Transverse colon (tissue), 4 donors: ENCODE measurements at regions of chr3 and their contacts with region 1.

Region 1: DNA sequence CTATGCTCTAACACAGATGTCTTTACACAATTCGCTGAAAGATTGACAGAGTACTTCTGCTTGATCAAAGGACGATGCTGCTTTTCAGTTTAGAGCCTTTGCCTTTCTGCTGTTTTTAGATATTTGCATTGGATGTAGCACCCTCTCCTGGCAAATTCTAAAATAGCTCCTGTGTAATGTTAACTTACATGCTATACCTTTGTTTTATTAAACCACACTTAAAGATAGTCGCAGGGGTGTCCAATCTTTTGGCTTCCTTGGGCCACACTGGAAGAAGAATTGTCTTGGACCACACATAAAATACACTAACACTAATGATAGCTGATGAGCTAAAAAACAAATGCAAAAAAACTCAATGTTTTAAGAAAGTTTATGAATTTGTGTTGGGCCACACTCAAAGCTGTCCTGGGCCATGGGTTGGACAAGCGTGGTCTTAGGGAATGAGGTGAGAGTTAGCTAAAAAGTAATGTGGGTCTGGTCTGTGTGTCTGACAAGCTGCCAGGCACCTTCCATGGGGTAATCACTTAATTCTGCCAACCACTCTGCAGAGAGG is 62.9 kb downstream of the ATG7 start:
- DNase-seq: no peak
- H3K4me3 ChIP-seq: no peak overlapping the region
- H3K27ac ChIP-seq: no peak overlapping the region
- H3K4me1 ChIP-seq: no peaks in the 10 kb centered on the region
- H3K27me3 ChIP-seq: no peaks in the 10 kb centered on the region
- CTCF ChIP-seq: peak; percentile 55 to 77 (median 67)
- EP300 ChIP-seq: no peak
- POLR2A ChIP-seq: no peak

Region 2: DNA sequence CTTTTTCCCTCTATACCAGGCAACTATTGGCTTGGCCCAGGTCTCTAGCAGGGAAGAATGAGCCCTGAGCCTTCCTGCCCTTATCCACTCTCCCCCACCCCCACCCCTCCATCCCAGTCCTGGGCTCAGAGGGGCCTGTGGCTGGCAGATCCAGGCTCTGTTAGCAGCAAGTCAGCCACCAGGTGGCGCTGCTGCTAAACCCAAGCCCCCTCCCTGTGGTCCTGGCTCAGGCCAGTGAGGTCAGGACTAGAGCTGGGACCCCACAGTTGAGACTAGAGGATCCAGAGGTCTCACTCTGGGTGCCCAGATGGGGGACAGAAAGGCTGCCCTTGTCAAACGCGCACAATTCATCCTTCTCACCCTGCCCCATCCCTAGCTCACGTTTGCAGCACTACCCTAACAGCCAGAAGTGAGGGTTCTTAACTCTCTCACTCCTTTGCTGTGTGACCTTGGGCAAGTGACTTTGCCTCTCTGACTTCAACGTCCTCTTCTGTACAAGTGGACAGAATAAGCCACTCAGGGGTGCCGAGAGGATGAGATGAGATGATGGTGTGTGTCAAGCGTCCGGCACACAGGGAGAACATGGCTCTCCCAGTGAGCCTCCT is 389.3 kb before region 1 on chr3:
- in situ Hi-C with region 1: loop called in 2 of 4 experiments (anchors 25 kb)
- intact Hi-C with region 1: no loop called
- DNase-seq: peak; percentile 39
- H3K4me3 ChIP-seq: no peak overlapping the region
- H3K27ac ChIP-seq: no peak overlapping the region
- H3K4me1 ChIP-seq: no peaks in the 10 kb centered on the region
- H3K27me3 ChIP-seq: peaks cover 12% of the 10 kb centered on the region
- CTCF ChIP-seq: peak; percentile 62 to 85 (median 81)
- EP300 ChIP-seq: no peak
- POLR2A ChIP-seq: no peak

Region 3: DNA sequence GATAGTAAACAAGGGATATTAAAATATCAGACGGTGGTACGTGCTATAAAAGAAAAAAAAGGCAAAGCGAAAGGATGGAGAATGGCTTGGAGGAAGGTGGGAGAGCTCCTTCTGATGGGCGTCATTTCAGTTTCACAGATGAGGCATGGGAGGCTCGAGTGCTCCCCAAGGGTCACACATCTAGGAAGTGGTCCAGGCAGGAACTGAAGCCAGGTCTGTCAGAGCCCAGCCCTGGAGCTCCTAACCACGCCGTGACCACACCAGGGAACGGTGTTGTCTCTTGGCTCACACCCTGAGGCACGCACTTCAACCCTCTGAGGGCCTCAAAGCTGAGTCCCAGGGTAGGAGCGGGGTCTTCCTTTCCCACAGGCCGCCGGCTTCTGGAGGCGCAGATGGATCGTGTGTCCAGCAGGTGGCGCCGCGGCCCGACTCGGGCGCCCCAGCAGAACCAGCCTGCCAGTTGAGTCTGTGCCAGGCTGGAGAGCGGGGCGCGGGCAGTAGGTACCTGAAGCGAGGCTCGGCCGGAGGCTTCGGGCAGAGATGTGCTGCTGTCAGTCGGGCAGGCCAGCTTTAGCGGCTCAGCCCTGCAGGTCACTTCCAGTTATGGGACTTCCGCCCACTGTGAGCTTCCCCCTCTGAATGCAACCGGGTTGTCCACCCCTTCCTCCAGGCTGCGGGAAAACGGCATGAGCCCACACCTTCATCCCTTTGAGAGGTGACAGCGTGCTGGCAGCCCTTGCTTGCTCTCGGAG is 274.5 kb before region 1 on chr3:
- in situ Hi-C with region 1: loop called (anchors 10 to 25 kb)
- intact Hi-C with region 1: loop called (anchors 5 kb)
- DNase-seq: peak; percentile 63
- H3K4me3 ChIP-seq: no peak overlapping the region
- H3K27ac ChIP-seq: no peak overlapping the region
- H3K4me1 ChIP-seq: peaks cover 3 to 10% (median 6%) of the 10 kb centered on the region in 4 donors
- H3K27me3 ChIP-seq: peaks cover 18% of the 10 kb centered on the region
- CTCF ChIP-seq: peak; percentile 83 to 90 (median 88)
- EP300 ChIP-seq: no peak
- POLR2A ChIP-seq: no peak

Region 4: GRCh38 chr3:11155341-11156025 is 179.6 kb before region 1 on chr3:
- in situ Hi-C with region 1: no loop called
- intact Hi-C with region 1: loop called (anchors 10 kb)
- DNase-seq: peak; percentile 74
- H3K4me3 ChIP-seq: peak overlapping the region; percentile 38 to 62 (median 44)
- H3K27ac ChIP-seq: peak overlapping the region; percentile 38 to 62 (median 46)
- H3K4me1 ChIP-seq: peaks cover 0 to 36% (median 9%) of the 10 kb centered on the region in 4 donors
- H3K27me3 ChIP-seq: peaks cover 21% of the 10 kb centered on the region
- CTCF ChIP-seq: peak; percentile 59 to 70 (median 66)
- EP300 ChIP-seq: no peak
- POLR2A ChIP-seq: no peak

Region 5: DNA sequence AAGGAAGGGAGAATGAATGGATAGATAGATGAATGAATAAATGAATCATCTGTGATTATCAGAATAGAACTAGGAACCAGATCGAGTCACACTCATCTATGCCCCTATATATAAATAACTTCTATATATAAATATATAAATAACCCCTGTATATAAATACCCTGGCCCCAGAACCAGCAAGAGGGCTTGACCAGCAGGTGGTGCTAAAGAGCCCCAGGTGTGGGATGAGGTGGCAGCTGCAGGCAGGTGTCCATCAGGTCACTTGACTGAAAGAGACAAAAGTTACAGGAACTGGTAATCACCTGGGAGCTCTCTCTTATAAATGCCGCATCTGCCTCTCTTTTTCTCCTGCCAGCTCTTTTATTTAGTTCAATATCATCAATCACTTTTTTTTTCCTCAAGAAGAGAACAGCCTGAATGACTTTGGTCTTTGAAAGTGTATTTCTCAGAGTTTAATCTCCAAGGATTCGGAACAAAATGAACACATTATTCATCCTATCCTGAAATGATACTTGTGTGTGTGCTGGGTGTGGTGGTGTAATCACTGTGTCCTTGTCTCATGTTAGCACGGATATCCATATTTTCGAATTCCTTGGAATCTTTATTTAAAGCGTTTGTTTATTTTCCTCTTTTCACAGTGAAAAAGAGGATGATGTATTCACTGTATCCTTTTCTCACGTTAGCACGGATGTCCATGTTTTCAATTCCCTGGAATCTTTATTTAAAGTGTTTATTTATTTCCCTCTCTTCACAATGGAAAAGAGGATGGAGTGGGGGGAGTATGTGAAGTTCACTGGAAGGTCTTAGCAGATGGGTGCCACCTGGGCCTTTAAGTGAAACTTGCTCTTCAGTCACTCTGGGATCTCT is 98.3 kb before region 1 on chr3:
- in situ Hi-C with region 1: loop called in 2 of 4 experiments (anchors 10 to 25 kb)
- intact Hi-C with region 1: no loop called
- DNase-seq: peak; percentile 84
- H3K4me3 ChIP-seq: no peak overlapping the region
- H3K27ac ChIP-seq: no peak overlapping the region
- H3K4me1 ChIP-seq: peaks cover 0 to 4% (median 0%) of the 10 kb centered on the region in 4 donors
- H3K27me3 ChIP-seq: no peaks in the 10 kb centered on the region
- CTCF ChIP-seq: peak; percentile 71 to 87 (median 77)
- EP300 ChIP-seq: no peak
- POLR2A ChIP-seq: no peak